Aorta (tissue), 5 donors: ENCODE measurements at regions of chr11 and their contacts with region 1.

Region 1: GRCh38 chr11:60775420-60775961 is 9.6 kb upstream of the MS4A10 start:
- DNase-seq: peak; percentile 87 to 91
- ATAC-seq: peak; percentile 86
- H3K4me3 ChIP-seq: no peak overlapping the region
- H3K27ac ChIP-seq: no peak overlapping the region
- H3K4me1 ChIP-seq: no peaks in the 10 kb centered on the region
- H3K27me3 ChIP-seq: no peaks in the 10 kb centered on the region

Region 2: GRCh38 chr11:60899046-60899936 is 123.8 kb after region 1 on chr11:
- intact Hi-C with region 1: loop called (anchors 5 kb)
- DNase-seq: no peak
- ATAC-seq: peak; percentile 82
- H3K4me3 ChIP-seq: no peak overlapping the region
- H3K27ac ChIP-seq: no peak overlapping the region
- H3K4me1 ChIP-seq: no peaks in the 10 kb centered on the region
- H3K27me3 ChIP-seq: no peaks in the 10 kb centered on the region

Region 3: GRCh38 chr11:61581030-61581928 is 805.8 kb after region 1 on chr11 and contains the start of gene SYT7:
- intact Hi-C with region 1: no loop called
- DNase-seq: peak; percentile 97 to 99
- ATAC-seq: peak; percentile 91
- H3K4me3 ChIP-seq: peak within 1 kb of the TSS; percentile 28 to 82
- H3K27ac ChIP-seq: no peak within 1 kb of the TSS
- H3K4me1 ChIP-seq: no peaks in the 10 kb centered on the region
- H3K27me3 ChIP-seq: no peaks in the 10 kb centered on the region
- total RNA-seq, gene SYT7: 1.0 to 2.3 TPM